Left lung (tissue), 14 donors: ENCODE measurements at regions of chr5 and their contacts with region 1.

Region 1: GRCh38 chr5:170638454-170639220 is 134.8 kb downstream of the KCNIP1 start:
- DNase-seq: peak in 3 of 4 donors; percentile 36 to 51 (median 36)
- ATAC-seq: peak; percentile 87
- H3K4me3 ChIP-seq: no peak overlapping the region
- H3K27ac ChIP-seq: no peak overlapping the region
- H3K4me1 ChIP-seq: peaks cover 0 to 3% of the 10 kb centered on the region in 2 donors
- H3K27me3 ChIP-seq: peaks cover 0 to 6% of the 10 kb centered on the region in 2 donors
- CTCF ChIP-seq: peak; percentile 73 to 94

Region 2: DNA sequence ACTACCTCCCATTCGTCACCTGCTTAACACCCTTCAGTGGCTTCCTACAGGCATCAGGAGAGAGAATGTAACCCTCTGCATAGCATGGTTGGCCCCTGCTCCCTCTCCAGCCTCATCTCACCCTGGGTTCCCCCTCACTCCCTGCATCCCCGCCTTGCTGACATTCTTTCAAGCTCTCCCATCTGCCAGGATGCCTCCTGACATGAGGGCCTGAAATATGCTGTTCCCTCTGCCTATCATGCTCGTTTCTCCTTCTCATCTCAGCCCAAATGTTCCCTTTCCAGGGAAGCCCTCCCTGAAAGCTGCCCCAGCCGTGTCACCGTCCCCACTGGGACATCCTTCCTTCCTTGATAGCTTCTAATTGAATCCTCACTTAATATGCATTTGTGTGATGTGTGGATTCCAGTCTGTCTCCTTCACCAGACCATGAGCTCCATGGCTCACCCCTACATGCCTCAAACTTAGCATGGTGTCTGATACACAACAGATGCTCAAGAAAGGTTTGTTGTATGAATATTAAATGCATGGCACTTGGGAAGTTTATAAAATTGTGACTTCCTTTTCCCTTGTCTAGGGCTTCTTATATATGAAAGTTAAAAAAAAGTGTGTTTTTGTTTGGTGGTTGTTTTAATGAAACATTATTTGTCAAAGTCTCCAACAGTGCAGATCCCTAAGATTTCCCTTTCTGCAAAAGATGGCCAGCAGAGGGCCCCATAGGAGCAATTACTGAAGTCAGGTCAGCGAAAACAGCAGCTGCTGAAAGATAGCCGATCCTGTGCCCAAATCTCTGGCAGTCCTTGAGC is 413.1 kb before region 1 on chr5:
- intact Hi-C with region 1: loop called in 1 of 2 experiments (anchors 10 kb)
- DNase-seq: peak in 3 of 4 donors; percentile 63 to 79 (median 65)
- ATAC-seq: peak; percentile 87
- H3K4me3 ChIP-seq: no peak overlapping the region
- H3K27ac ChIP-seq: no peak overlapping the region
- H3K4me1 ChIP-seq: no peaks in the 10 kb centered on the region
- H3K27me3 ChIP-seq: no peaks in the 10 kb centered on the region
- CTCF ChIP-seq: peak; percentile 74 to 78

Region 3: GRCh38 chr5:170434966-170435605 is 203.6 kb before region 1 on chr5:
- intact Hi-C with region 1: loop called (anchors 5 to 10 kb)
- DNase-seq: peak; percentile 43 to 91 (median 66)
- ATAC-seq: peak; percentile 98
- H3K4me3 ChIP-seq: no peak overlapping the region
- H3K27ac ChIP-seq: no peak overlapping the region
- H3K4me1 ChIP-seq: no peaks in the 10 kb centered on the region
- H3K27me3 ChIP-seq: no peaks in the 10 kb centered on the region
- CTCF ChIP-seq: peak; percentile 98 to 99

Region 4: GRCh38 chr5:170791325-170791954 is 152.8 kb after region 1 on chr5:
- intact Hi-C with region 1: loop called in 1 of 2 experiments (anchors 5 kb)
- DNase-seq: peak in 3 of 4 donors; percentile 53 to 78 (median 61)
- ATAC-seq: peak; percentile 96
- H3K4me3 ChIP-seq: no peak overlapping the region
- H3K27ac ChIP-seq: no peak overlapping the region
- H3K4me1 ChIP-seq: no peaks in the 10 kb centered on the region
- H3K27me3 ChIP-seq: no peaks in the 10 kb centered on the region
- CTCF ChIP-seq: peak; percentile 38 to 48